ENCODE measurements at regions of chr7 and their contacts with region 1.

Region 1: DNA sequence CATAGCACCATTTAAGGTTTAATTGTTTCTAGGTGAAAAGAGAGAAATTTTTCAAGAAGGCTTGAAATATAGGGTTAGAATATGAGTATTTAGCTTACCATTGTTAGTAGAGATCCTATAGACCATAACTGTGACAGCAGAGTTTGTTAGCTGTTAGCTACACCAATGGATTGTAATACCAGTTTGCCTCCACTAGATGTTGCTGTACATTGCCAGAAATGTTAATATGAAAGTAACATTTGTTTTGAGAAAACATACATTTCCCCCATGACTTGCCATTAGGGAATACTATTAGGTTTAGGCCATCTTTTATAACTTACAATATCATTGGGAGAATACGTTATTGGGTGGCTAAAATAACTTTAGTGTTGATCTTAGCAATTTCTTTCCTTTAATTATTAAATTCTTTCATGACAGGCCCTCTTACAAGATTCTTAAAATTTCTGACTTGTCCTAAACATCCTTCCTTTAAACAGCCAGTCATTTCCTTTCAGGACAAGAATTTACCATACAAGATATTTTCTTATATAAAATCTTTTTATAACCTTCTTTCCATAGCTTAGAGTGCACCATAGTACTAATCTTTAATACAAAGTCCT is 39.5 kb downstream of the ZNF117 start:
- DNase-seq: peak; percentile 16
- ATAC-seq: peak; percentile 79
- H3K4me3 ChIP-seq: no peak overlapping the region
- H3K27ac ChIP-seq: no peak overlapping the region
- H3K4me1 ChIP-seq: no peaks in the 10 kb centered on the region
- H3K27me3 ChIP-seq: no peaks in the 10 kb centered on the region; a peak in 1 of 4 replicates
- CTCF ChIP-seq: peak; percentile 69 to 82 (median 69); a peak in 5 of 6 replicates
- EP300 ChIP-seq: no peak
- POLR2A ChIP-seq: no peak
- RAD21 ChIP-seq: peak; percentile 83

Region 2: GRCh38 chr7:65317372-65317771 is 366.0 kb after region 1 on chr7:
- CTCF ChIA-PET with region 1: no interaction called
- POLR2A ChIA-PET with region 1: no interaction called
- RAD21 ChIA-PET with region 1: interaction called, 3 read pairs
- SMC1A ChIA-PET with region 1: no interaction called
- in situ Hi-C with region 1: loop called (anchors 5 kb)
- intact Hi-C with region 1: no loop called
- DNase-seq: no peak
- ATAC-seq: no peak
- H3K4me3 ChIP-seq: no peak overlapping the region
- H3K27ac ChIP-seq: no peak overlapping the region
- H3K4me1 ChIP-seq: no peaks in the 10 kb centered on the region
- H3K27me3 ChIP-seq: no peaks in the 10 kb centered on the region
- CTCF ChIP-seq: no peak
- EP300 ChIP-seq: no peak
- POLR2A ChIP-seq: no peak
- RAD21 ChIP-seq: no peak

Measured in GM12878 (cell line).